B cell (primary cell): ENCODE measurements at regions of chr6 and their contacts with region 1.

Region 1: GRCh38 chr6:136792410-136793262 is at the start of gene MAP3K5:
- DNase-seq: peak; percentile 96
- ATAC-seq: peak; percentile 68
- H3K4me3 ChIP-seq: peak within 1 kb of the TSS; percentile 81 to 99 (median 96)
- H3K4me3 Mint-ChIP-seq: peak within 1 kb of the TSS; percentile 95
- H3K27ac ChIP-seq: peak within 1 kb of the TSS; percentile 95 to 98
- H3K27ac Mint-ChIP-seq: peak within 1 kb of the TSS; percentile 95
- H3K4me1 ChIP-seq: peaks cover 35 to 36% of the 10 kb centered on the region in 2 donors
- H3K4me1 Mint-ChIP-seq: peaks cover 39% of the 10 kb centered on the region
- H3K27me3 ChIP-seq: no peaks in the 10 kb centered on the region
- H3K27me3 Mint-ChIP-seq: no peaks in the 10 kb centered on the region
- CTCF ChIP-seq: peak; percentile 76
- total RNA-seq, gene MAP3K5: 34.1 and 35.1 TPM in 2 replicates

Region 2: DNA sequence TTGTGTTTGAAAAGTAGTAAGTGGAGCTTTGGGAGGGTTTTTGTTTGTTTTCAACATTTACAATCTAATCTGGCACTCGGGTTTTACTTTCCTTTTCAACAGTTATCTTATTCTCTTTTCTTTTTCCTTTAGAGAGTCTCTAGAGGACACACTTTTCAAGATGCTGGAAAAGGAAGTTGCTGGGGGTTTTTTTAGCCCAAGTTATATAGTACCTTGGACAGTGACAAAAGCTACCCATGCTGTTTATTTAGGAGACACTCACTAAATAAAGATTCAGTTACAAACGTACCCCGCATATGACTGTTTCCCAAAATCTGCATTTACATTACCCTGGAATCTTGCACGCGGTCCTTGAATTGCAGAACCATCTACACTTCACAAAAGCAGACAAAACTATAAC is 321.3 kb before region 1 on chr6:
- CTCF ChIA-PET with region 1: no interaction called
- POLR2A ChIA-PET with region 1: no interaction called
- intact Hi-C with region 1: no loop called
- DNase-seq: no peak
- ATAC-seq: no peak
- H3K4me3 ChIP-seq: no peak overlapping the region
- H3K4me3 Mint-ChIP-seq: no peak overlapping the region
- H3K27ac ChIP-seq: no peak overlapping the region
- H3K27ac Mint-ChIP-seq: no peak overlapping the region
- H3K4me1 ChIP-seq: no peaks in the 10 kb centered on the region
- H3K4me1 Mint-ChIP-seq: peaks cover 1% of the 10 kb centered on the region
- H3K27me3 ChIP-seq: no peaks in the 10 kb centered on the region
- H3K27me3 Mint-ChIP-seq: peaks cover 20% of the 10 kb centered on the region
- CTCF ChIP-seq: no peak

Region 3: DNA sequence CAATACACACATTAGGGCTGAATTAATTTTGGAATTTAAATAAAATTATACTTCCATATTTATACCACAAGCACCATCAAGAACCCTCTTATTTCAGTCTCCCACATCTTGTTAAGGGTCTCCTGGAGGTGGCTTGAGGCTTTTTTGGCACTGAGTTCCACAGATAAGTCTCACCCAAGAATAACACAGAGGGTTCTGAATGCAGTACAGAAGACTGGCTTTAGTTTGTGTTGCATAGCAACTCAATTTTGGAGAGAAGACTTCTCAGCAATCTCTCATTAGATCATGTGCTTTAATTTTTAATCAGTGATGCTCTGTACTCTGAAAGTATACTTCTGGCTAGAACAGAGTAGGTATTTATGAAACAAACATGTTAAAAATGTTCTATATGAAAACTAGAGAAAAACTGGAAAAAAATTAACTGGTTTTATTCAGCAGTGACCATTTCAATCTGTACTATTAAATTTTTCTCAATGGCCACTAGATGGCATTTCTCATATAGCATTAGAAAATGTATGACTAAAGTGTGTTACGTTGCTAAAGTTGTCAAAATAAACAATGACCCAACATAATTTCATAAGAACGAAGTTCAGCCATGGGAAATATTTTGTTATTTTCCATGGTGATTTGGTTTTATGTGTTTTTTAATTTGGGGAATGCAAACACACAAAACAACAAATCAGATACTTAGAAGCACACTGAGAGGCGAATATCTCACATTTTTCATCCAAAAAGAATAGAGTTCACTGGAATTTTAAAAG is 209.7 kb before region 1 on chr6:
- CTCF ChIA-PET with region 1: interaction called, 11 read pairs
- POLR2A ChIA-PET with region 1: no interaction called
- intact Hi-C with region 1: loop called (anchors 2 kb)
- DNase-seq: peak; percentile 18
- ATAC-seq: no peak
- H3K4me3 ChIP-seq: no peak overlapping the region
- H3K4me3 Mint-ChIP-seq: no peak overlapping the region
- H3K27ac ChIP-seq: no peak overlapping the region
- H3K27ac Mint-ChIP-seq: no peak overlapping the region
- H3K4me1 ChIP-seq: no peaks in the 10 kb centered on the region
- H3K4me1 Mint-ChIP-seq: no peaks in the 10 kb centered on the region
- H3K27me3 ChIP-seq: no peaks in the 10 kb centered on the region
- H3K27me3 Mint-ChIP-seq: no peaks in the 10 kb centered on the region
- CTCF ChIP-seq: peak; percentile 64

Region 4: DNA sequence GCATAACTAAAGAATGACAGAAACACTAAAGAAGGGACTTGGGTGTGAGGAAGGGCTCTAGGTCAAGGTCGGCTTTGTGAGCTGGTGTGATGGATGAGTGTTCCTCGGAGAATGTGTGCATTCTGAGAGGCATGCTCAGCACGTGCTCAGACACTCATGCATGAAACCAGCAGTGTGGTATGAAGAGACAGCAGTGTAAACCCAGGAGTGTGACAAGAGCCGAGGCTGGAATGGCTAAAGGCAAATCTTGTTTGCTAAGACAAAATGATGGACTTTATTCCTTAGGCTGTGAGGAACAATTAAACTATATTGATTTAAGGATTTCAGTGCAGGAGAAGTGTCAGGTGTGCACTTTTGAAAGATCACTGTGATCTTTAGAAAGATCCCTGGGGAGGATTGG is 135.0 kb before region 1 on chr6:
- CTCF ChIA-PET with region 1: interaction called, 24 read pairs
- POLR2A ChIA-PET with region 1: no interaction called
- intact Hi-C with region 1: no loop called
- DNase-seq: no peak
- ATAC-seq: no peak
- H3K4me3 ChIP-seq: no peak overlapping the region
- H3K4me3 Mint-ChIP-seq: no peak overlapping the region
- H3K27ac ChIP-seq: no peak overlapping the region
- H3K27ac Mint-ChIP-seq: no peak overlapping the region
- H3K4me1 ChIP-seq: no peaks in the 10 kb centered on the region
- H3K4me1 Mint-ChIP-seq: no peaks in the 10 kb centered on the region
- H3K27me3 ChIP-seq: no peaks in the 10 kb centered on the region
- H3K27me3 Mint-ChIP-seq: no peaks in the 10 kb centered on the region
- CTCF ChIP-seq: no peak

Region 5: DNA sequence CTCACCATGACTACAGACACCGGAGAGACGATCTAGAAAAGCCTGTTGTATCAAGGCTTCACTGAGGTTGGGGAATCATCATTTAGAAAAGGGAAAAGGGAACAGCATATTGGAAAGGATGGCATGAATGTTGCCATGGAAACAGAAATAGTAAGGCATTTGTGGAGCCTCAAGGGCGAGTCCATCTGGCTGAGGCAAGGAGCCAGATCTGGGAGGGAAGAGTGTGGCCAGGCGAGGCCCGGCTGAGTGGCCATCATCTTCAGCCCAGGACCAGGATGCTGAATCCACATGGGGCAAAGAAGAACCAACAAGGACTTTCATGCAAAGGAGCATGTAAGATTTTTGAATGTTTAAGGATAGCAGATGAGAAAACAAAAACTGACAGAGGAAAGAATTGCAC is 86.2 kb before region 1 on chr6:
- CTCF ChIA-PET with region 1: interaction called, 23 read pairs
- POLR2A ChIA-PET with region 1: no interaction called
- intact Hi-C with region 1: no loop called
- DNase-seq: no peak
- ATAC-seq: no peak
- H3K4me3 ChIP-seq: no peak overlapping the region
- H3K4me3 Mint-ChIP-seq: no peak overlapping the region
- H3K27ac ChIP-seq: no peak overlapping the region
- H3K27ac Mint-ChIP-seq: no peak overlapping the region
- H3K4me1 ChIP-seq: peaks cover 3 to 8% of the 10 kb centered on the region in 2 donors
- H3K4me1 Mint-ChIP-seq: peaks cover 18% of the 10 kb centered on the region
- H3K27me3 ChIP-seq: no peaks in the 10 kb centered on the region
- H3K27me3 Mint-ChIP-seq: no peaks in the 10 kb centered on the region
- CTCF ChIP-seq: no peak

Region 6: GRCh38 chr6:136745300-136745699 is 47.3 kb before region 1 on chr6:
- CTCF ChIA-PET with region 1: interaction called, 125 read pairs
- POLR2A ChIA-PET with region 1: interaction called, 4 read pairs
- intact Hi-C with region 1: no loop called
- DNase-seq: no peak
- ATAC-seq: no peak
- H3K4me3 ChIP-seq: no peak overlapping the region
- H3K4me3 Mint-ChIP-seq: no peak overlapping the region
- H3K27ac ChIP-seq: no peak overlapping the region
- H3K27ac Mint-ChIP-seq: no peak overlapping the region
- H3K4me1 ChIP-seq: peaks cover 15 to 17% of the 10 kb centered on the region in 2 donors
- H3K4me1 Mint-ChIP-seq: peaks cover 49% of the 10 kb centered on the region
- H3K27me3 ChIP-seq: no peaks in the 10 kb centered on the region
- H3K27me3 Mint-ChIP-seq: no peaks in the 10 kb centered on the region
- CTCF ChIP-seq: no peak

Region 7: GRCh38 chr6:136822376-136823127 is 29.9 kb after region 1 on chr6 and contains the start of gene PEX7:
- CTCF ChIA-PET with region 1: interaction called, 22 read pairs
- POLR2A ChIA-PET with region 1: interaction called, 7 read pairs
- intact Hi-C with region 1: loop called (anchors 1 kb)
- DNase-seq: peak; percentile 94
- ATAC-seq: peak; percentile 91
- H3K4me3 ChIP-seq: peak within 1 kb of the TSS; percentile 45 to 87 (median 71)
- H3K4me3 Mint-ChIP-seq: peak within 1 kb of the TSS; percentile 90
- H3K27ac ChIP-seq: peak within 1 kb of the TSS; percentile 65 to 95
- H3K27ac Mint-ChIP-seq: peak within 1 kb of the TSS; percentile 91
- H3K4me1 ChIP-seq: peaks cover 11 to 12% of the 10 kb centered on the region in 2 donors
- H3K4me1 Mint-ChIP-seq: peaks cover 18% of the 10 kb centered on the region
- H3K27me3 ChIP-seq: peaks cover 0 to 3% (median 0%) of the 10 kb centered on the region in 4 experiments
- H3K27me3 Mint-ChIP-seq: peaks cover 9% of the 10 kb centered on the region
- CTCF ChIP-seq: peak; percentile 82
- total RNA-seq, gene PEX7: 3.9 and 6.6 TPM in 2 replicates